ENCODE measurements at regions of chr20 and their contacts with region 1.

Region 1: GRCh38 chr20:46057856-46058598 is 29.0 kb downstream of the SLC12A5 start:
- DNase-seq: peak; percentile 47
- ATAC-seq: peak; percentile 71
- H3K4me3 ChIP-seq: peak overlapping the region; percentile 21; the same call in 1 of the 2 replicates
- H3K27ac ChIP-seq: no peak overlapping the region
- H3K4me1 ChIP-seq: no peaks in the 10 kb centered on the region; the same call in 1 of the 2 replicates
- H3K27me3 ChIP-seq: peaks cover 8% of the 10 kb centered on the region; the same call in 1 of the 2 replicates
- CTCF ChIP-seq: peak; percentile 23
- POLR2A ChIP-seq: no peak
- RAD21 ChIP-seq: peak; percentile 10; the same call in 1 of the 2 replicates

Region 2: DNA sequence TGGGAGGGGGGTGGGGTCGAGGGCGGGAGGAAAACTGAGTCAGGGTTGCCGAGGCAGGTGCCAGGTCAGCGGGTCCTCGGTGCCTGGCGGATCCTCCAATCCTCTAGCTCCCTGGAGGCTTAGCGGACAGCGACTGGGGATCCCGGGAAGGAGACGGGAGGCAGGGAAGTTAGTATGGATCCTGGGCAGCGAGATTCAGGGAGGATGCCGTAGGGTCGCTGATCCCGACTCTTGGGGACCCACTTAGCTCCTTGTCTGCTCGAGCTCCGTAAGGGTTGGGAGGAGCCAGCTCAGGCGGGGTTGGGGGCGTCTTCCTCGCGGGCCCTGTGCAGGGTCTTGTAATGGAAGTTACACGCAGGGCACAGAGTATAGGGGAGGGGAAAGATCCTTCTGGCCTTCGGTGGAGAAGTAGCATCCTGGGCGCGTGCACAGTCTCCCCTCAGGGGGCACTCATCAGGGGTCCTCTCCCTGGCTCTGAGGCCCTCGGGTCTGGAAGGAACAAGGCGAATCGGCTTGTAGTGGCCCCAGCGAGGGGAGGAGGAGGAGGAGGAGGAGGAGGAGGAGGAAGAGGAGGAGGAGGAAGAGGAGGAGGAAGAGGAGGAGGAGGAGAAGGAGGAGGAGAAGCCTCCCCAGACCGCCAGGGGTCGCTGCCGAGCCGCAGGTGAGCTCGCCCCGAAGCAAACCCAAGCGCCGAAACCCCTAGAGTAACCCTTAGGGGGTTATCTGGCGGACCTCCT is 35.4 kb before region 1 on chr20:
- CTCF ChIA-PET with region 1: no interaction called
- POLR2A ChIA-PET with region 1: no interaction called
- dilution Hi-C with region 1: no loop called
- in situ Hi-C with region 1: no loop called
- intact Hi-C with region 1: loop called (anchors 5 kb)
- DNase-seq: peak; percentile 9
- ATAC-seq: peak; percentile 25
- H3K4me3 ChIP-seq: no peak overlapping the region
- H3K27ac ChIP-seq: no peak overlapping the region
- H3K4me1 ChIP-seq: no peaks in the 10 kb centered on the region
- H3K27me3 ChIP-seq: peaks cover 39% of the 10 kb centered on the region
- CTCF ChIP-seq: peak; percentile 57
- POLR2A ChIP-seq: no peak
- RAD21 ChIP-seq: peak; percentile 48

Region 3: GRCh38 chr20:46040902-46041535 is 17.0 kb before region 1 on chr20:
- CTCF ChIA-PET with region 1: no interaction called
- POLR2A ChIA-PET with region 1: no interaction called
- dilution Hi-C with region 1: no loop called
- in situ Hi-C with region 1: no loop called
- intact Hi-C with region 1: loop called (anchors 1 kb)
- DNase-seq: peak; percentile 26
- ATAC-seq: peak; percentile 86
- H3K4me3 ChIP-seq: no peak overlapping the region
- H3K27ac ChIP-seq: no peak overlapping the region
- H3K4me1 ChIP-seq: no peaks in the 10 kb centered on the region
- H3K27me3 ChIP-seq: peaks cover 13% of the 10 kb centered on the region
- CTCF ChIP-seq: no peak
- POLR2A ChIP-seq: no peak
- RAD21 ChIP-seq: no peak

Region 4: GRCh38 chr20:46070215-46070900 is 12.3 kb after region 1 on chr20:
- CTCF ChIA-PET with region 1: interaction called, 10 read pairs
- POLR2A ChIA-PET with region 1: no interaction called
- dilution Hi-C with region 1: no loop called
- in situ Hi-C with region 1: no loop called
- intact Hi-C with region 1: no loop called
- DNase-seq: peak; percentile 86
- ATAC-seq: peak; percentile 96
- H3K4me3 ChIP-seq: no peak overlapping the region
- H3K27ac ChIP-seq: peak overlapping the region; percentile 40; the same call in 1 of the 2 replicates
- H3K4me1 ChIP-seq: peaks cover 2% of the 10 kb centered on the region; the same call in 1 of the 2 replicates
- H3K27me3 ChIP-seq: no peaks in the 10 kb centered on the region
- CTCF ChIP-seq: no peak
- POLR2A ChIP-seq: no peak
- RAD21 ChIP-seq: no peak

Region 5: GRCh38 chr20:46089417-46090388 is 31.7 kb after region 1 on chr20 and contains the start of gene NCOA5:
- CTCF ChIA-PET with region 1: interaction called, 3 read pairs
- POLR2A ChIA-PET with region 1: no interaction called
- dilution Hi-C with region 1: no loop called
- in situ Hi-C with region 1: no loop called
- intact Hi-C with region 1: loop called (anchors 1 kb)
- DNase-seq: peak; percentile 95
- ATAC-seq: peak; percentile 94
- H3K4me3 ChIP-seq: peak within 1 kb of the TSS; percentile 91
- H3K27ac ChIP-seq: peak within 1 kb of the TSS; percentile 97
- H3K4me1 ChIP-seq: peaks cover 7% of the 10 kb centered on the region
- H3K27me3 ChIP-seq: no peaks in the 10 kb centered on the region
- CTCF ChIP-seq: peak; percentile 44
- POLR2A ChIP-seq: peak; percentile 94
- RAD21 ChIP-seq: no peak
- total RNA-seq, gene NCOA5: 20.6 and 22.5 TPM in 2 replicates